CD4-positive, alpha-beta memory T cell (primary cell): ENCODE measurements at regions of chr13 and their contacts with region 1.

Region 1: GRCh38 chr13:112651750-112652511 is 37.9 kb upstream of the ATP11A start:
- DNase-seq: no peak
- H3K4me3 ChIP-seq: no peak overlapping the region
- H3K4me3 Mint-ChIP-seq: no peak overlapping the region
- H3K27ac ChIP-seq: no peak overlapping the region
- H3K27ac Mint-ChIP-seq: peak overlapping the region in 1 of 7 donors; percentile 44
- H3K4me1 ChIP-seq: no peaks in the 10 kb centered on the region
- H3K4me1 Mint-ChIP-seq: no peaks in the 10 kb centered on the region
- H3K27me3 ChIP-seq: no peaks in the 10 kb centered on the region
- H3K27me3 Mint-ChIP-seq: peaks cover 0 to 2% of the 10 kb centered on the region in 2 donors

Region 2: GRCh38 chr13:112522578-112522977 is 129.4 kb before region 1 on chr13:
- CTCF ChIA-PET with region 1: no interaction called
- POLR2A ChIA-PET with region 1: no interaction called
- intact Hi-C with region 1: no loop called
- DNase-seq: no peak
- H3K4me3 ChIP-seq: no peak overlapping the region
- H3K4me3 Mint-ChIP-seq: no peak overlapping the region
- H3K27ac ChIP-seq: no peak overlapping the region
- H3K27ac Mint-ChIP-seq: no peak overlapping the region
- H3K4me1 ChIP-seq: no peaks in the 10 kb centered on the region
- H3K4me1 Mint-ChIP-seq: no peaks in the 10 kb centered on the region
- H3K27me3 ChIP-seq: no peaks in the 10 kb centered on the region
- H3K27me3 Mint-ChIP-seq: no peaks in the 10 kb centered on the region

Region 3: DNA sequence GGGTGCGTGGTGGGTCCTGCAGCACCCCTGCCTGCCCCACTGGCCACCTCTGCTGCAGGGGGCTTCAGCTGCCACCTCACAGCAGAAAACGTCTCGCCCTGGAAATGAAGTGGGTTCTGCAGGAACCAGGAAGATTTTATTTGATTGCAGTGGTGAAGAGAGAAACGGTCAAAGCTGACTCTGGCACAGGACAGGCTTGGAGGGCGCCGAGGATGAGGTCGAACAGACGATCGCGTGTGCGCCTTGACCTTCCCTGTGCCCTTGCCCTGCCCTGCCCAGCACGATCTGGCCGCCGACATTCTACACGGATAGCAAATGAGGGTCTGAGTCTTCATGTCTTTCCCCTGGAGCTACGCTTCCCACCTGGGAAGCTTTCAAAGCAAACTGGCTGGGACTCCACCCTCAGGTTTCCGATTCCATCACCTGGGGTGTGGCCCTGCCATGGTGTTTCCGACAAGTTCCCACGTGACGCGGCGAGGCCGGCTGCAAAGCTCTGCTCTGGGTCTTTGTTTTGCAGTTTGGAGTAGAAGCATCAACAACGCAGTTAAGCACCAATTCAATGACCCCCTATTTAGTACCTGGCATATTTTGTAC is 13.7 kb before region 1 on chr13:
- CTCF ChIA-PET with region 1: interaction called, 12 read pairs
- POLR2A ChIA-PET with region 1: no interaction called
- intact Hi-C with region 1: no loop called
- DNase-seq: peak in 1 of 5 donors; percentile 4
- H3K4me3 ChIP-seq: no peak overlapping the region
- H3K4me3 Mint-ChIP-seq: peak overlapping the region in 3 of 8 donors; percentile 5 to 49 (median 15)
- H3K27ac ChIP-seq: no peak overlapping the region
- H3K27ac Mint-ChIP-seq: no peak overlapping the region
- H3K4me1 ChIP-seq: peaks cover 7% of the 10 kb centered on the region
- H3K4me1 Mint-ChIP-seq: peaks cover 0 to 10% (median 5%) of the 10 kb centered on the region in 4 donors
- H3K27me3 ChIP-seq: no peaks in the 10 kb centered on the region
- H3K27me3 Mint-ChIP-seq: peaks cover 17 to 20% of the 10 kb centered on the region in 2 donors